ENCODE measurements at regions of chr5 and their contacts with region 1.

Region 1: GRCh38 chr5:94968507-94969095 is 316.3 kb downstream of the MCTP1 start:
- DNase-seq: no peak
- ATAC-seq: peak; percentile 31 to 63
- H3K4me3 ChIP-seq: no peak overlapping the region
- H3K27ac ChIP-seq: no peak overlapping the region
- H3K4me1 ChIP-seq: no peaks in the 10 kb centered on the region
- H3K27me3 ChIP-seq: no peaks in the 10 kb centered on the region

Region 2: DNA sequence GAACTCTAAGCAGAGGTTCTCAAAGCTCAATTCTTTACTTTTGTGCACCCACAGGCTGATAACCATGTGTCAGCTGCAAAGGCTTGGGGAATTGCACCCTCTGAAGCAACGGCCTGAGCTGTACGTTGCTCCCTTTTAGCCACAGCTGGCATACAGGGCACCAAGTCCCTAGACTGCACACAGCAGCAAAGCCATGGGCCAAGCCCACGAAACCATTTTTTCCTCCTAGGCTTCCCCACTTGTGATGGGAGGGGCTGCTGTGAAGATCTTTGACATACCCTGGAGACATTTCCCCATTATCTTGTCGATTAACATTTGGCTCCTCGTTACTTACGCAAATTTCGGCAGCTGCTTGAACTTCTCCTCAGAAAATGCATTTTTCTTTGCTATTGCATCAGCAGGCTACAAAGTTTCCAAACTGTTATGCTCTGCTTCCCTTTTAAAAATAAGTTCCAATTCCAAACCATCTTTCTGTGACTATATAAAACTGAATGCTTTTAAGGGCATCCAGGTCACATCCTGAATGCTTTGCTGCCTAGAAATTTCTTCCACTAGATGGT is 373.2 kb before region 1 on chr5:
- intact Hi-C with region 1: no loop called
- DNase-seq: no peak
- ATAC-seq: no peak
- H3K4me3 ChIP-seq: no peak overlapping the region
- H3K27ac ChIP-seq: no peak overlapping the region
- H3K4me1 ChIP-seq: no peaks in the 10 kb centered on the region
- H3K27me3 ChIP-seq: no peaks in the 10 kb centered on the region

Region 3: GRCh38 chr5:95238560-95239325 is 270.1 kb after region 1 on chr5:
- intact Hi-C with region 1: loop called in 3 of 4 experiments (anchors 5 to 10 kb)
- DNase-seq: no peak
- ATAC-seq: no peak
- H3K4me3 ChIP-seq: no peak overlapping the region
- H3K27ac ChIP-seq: no peak overlapping the region
- H3K4me1 ChIP-seq: no peaks in the 10 kb centered on the region
- H3K27me3 ChIP-seq: no peaks in the 10 kb centered on the region

Region 4: DNA sequence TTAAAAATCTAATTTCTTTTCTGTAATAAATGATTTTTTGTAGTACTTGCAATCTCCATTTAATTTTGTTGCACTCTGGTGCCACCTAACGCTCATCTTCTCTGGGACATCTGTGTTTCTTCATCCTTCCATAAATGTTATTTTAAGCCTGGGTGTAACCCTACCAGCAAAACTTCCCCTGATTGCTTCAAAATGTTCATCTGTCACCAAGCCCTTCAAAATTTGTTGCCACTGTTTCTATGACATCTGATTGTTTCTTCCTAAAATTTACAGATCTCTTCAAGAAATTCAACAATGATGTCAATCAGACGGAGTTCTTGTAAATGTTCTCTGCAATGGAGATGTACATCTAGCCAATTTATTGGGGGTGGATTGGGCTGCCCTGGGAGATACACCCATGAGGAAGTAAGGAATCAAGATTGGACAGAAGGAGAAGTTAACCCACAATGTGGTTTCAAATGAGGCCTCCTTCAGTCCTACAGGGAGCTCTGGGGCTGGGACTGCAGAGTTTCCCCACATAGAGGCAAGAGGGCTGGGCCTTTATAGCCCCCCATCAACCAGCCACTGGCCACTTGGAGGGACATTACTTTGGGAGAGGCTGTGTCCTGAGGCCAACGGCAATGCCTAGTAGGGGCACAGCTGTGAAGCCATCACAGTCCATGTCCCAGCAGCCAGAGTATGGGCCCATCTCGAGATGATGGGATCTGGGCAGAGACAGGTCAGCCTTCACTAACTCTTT is 293.0 kb after region 1 on chr5:
- intact Hi-C with region 1: loop called in 1 of 4 experiments (anchors 10 kb)
- DNase-seq: peak in 1 of 3 donors; percentile 16
- ATAC-seq: peak; percentile 36 to 57
- H3K4me3 ChIP-seq: no peak overlapping the region
- H3K27ac ChIP-seq: no peak overlapping the region
- H3K4me1 ChIP-seq: no peaks in the 10 kb centered on the region
- H3K27me3 ChIP-seq: no peaks in the 10 kb centered on the region